ENCODE measurements at regions of chr3 and their contacts with region 1.

Region 1: DNA sequence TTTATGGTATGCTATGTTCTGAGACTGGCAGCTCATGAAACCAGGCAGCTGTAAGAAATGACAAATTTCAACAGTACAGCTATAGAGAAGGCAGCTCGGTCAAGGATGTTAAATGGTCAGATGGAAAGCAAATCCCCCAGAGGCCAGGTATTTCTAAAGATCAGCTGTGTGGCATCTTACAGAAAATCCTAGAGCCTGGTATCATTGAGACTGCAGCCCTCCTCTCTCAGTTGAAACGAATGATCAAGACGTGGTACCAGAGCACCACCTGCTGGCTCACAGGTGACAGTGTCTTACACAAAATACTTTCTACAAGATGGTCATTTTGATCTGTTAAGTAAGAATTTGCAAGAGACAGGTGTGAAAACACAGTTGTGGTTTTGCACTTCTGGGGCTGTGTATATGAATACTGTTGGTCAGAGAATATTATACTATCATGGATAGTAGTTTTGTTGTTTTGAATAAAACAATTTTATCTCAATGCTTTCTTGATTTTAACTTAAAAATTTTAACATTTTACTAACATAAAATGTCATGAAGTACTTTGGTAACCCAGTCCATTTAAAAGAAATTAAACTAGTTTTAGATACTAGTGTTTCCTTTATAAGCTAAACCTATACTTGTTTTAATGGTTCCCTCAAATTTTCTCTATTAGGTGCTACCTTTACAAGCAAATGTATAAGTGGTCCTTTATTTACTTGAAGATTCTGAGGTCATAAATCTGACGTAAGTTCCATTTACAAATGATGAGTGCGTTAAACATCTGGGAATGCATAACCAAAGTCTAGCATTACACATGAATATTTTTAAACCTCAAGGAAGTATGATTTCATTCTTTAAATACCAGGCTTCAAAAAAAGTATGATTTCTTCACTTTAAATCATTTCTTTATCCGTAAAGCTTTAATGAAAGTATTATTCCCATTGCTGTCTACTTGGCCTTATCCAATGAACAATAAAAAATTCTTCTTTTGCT is 121.8 kb downstream of the PDZRN3 start:
- DNase-seq: peak; percentile 77 to 82 (median 78)
- ATAC-seq: peak; percentile 85
- H3K4me3 ChIP-seq: no peak overlapping the region
- H3K27ac ChIP-seq: no peak overlapping the region
- H3K4me1 ChIP-seq: peaks cover 12% of the 10 kb centered on the region
- H3K27me3 ChIP-seq: no peaks in the 10 kb centered on the region
- CTCF ChIP-seq: peak; percentile 75 to 92 (median 87)
- POLR2A ChIP-seq: no peak

Region 2: DNA sequence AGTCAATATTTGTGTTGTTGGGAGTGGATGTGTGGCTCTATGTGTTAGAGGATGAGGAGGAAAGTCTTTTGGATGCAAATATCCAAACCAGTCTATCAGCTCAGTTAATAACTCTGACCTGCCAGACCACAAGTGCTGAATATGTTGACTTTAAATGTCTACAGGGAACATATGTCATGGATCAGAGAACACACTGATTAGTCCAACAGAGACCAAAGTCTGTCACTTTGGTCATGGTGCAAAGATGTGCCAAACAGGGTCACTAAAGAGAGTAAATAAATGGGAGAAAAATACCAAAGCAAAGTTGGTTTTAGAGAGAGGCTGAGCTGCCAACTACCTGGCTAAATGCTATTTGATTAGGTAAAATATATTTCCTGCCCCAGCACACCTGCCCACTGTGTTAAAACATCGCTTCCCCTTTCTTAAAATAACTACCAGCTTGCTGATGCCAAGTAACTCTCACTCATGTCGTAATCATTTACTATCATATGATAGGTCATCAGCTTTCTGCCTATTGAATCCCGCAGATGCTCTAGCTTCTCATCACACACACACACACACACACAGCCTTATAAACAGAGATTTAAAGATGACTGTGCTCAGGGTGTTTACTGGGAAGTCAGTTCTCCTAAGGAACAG is 51.5 kb before region 1 on chr3:
- intact Hi-C with region 1: loop called (anchors 10 kb)
- DNase-seq: no peak
- ATAC-seq: peak; percentile 30
- H3K4me3 ChIP-seq: no peak overlapping the region
- H3K27ac ChIP-seq: no peak overlapping the region
- H3K4me1 ChIP-seq: peaks cover 9% of the 10 kb centered on the region
- H3K27me3 ChIP-seq: no peaks in the 10 kb centered on the region
- CTCF ChIP-seq: no peak
- POLR2A ChIP-seq: no peak

Region 3: DNA sequence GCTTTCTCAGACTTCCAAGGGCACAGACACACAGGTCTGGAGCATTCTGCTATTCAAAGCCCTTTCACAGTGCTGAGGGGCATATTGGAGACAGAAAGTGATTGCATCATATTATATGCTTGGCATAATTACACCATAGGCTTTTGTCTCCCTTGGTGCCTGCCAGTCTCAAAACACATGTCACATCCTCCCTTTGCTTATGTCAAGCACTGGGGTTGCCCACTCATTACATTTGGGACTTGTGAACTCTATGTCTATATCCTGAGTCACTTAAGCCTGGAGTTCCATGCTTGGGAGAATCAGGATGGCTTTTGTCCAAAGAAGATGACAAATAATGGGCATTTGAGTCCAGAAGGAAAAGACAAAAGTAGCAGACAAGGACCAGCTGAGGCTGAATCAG is 134.1 kb after region 1 on chr3:
- intact Hi-C with region 1: no loop called
- DNase-seq: no peak
- ATAC-seq: no peak
- H3K4me3 ChIP-seq: no peak overlapping the region
- H3K27ac ChIP-seq: no peak overlapping the region
- H3K4me1 ChIP-seq: no peaks in the 10 kb centered on the region
- H3K27me3 ChIP-seq: no peaks in the 10 kb centered on the region
- CTCF ChIP-seq: no peak
- POLR2A ChIP-seq: no peak